ENCODE measurements at regions of chr17 and their contacts with region 1.

Region 1: DNA sequence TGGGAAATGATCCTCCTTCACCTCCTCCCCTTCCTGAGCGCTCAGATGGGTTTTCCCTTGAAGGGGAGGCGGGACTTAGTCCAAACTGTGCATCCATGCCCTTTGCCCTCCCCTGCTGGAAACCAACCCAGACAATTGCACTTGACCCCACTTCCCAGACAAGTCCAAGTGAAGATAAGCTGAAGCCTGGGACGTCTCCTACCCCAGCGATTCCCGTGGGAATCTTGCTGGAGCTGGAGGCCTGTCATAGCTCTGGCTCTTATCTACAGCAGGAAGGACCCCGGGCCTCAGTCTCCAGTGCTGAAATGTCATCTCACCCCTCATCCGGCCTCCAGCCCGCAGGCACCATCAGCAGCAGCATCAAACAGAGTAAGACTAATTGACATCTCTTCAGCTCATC is 6.5 kb upstream of the NGFR start:
- DNase-seq: no peak
- H3K4me3 ChIP-seq: no peak overlapping the region
- H3K27me3 ChIP-seq: peaks cover 39% of the 10 kb centered on the region
- CTCF ChIP-seq: no peak

Region 2: DNA sequence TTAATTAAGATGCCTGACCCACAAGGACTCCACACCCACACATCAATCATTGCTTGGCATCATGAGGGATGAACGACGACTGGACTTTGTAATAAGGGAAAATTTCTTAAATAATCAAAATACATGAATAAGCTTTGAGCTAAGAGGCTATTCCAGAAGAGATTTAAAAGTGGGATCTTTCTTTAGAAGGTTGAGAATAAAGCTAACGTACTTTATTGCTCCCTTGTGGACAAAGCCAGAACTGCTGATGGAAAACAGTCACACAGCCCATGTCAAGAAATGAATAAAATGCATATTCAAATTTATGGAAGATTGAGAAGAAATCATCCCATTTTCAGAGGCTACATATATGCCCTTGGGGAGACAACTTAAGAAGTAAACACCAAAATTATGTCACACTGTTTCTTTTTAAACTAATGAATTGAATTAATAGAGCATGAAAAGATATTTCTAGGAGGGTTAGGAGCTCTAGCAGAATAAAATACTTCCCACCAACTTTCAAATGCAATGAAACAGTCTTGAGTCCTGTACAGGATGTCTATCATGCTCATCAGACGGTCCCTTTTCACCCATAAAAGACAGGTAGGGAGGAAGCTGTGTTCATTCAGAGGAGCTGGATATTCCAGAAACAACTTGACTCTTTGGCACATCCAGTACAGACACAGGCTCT is 197.8 kb before region 1 on chr17:
- CTCF ChIA-PET with region 1: no interaction called
- POLR2A ChIA-PET with region 1: no interaction called
- DNase-seq: no peak
- H3K4me3 ChIP-seq: no peak overlapping the region
- H3K27me3 ChIP-seq: no peaks in the 10 kb centered on the region
- CTCF ChIP-seq: peak; percentile 75

Region 3: DNA sequence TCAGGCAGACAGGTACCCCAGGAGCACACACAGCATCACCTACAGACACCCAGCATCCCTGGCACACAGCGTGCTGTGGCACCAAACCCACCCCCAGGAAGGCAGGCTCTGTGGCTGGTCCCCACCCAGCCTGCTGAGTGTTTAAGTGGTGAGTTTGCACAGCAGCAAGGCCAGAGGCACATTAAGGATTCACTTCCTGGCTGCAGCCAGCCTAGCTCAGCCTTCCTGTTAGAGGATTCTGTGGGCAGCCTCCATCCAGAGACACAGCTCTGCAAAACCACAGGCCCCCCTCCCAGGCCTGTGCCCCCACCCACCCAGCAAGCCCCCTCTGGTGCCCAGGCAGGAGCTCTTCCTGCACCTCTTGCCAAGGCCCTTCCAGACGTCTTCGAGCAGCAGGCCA is 37.9 kb before region 1 on chr17:
- CTCF ChIA-PET with region 1: no interaction called
- POLR2A ChIA-PET with region 1: interaction called, 10 read pairs
- DNase-seq: no peak
- H3K4me3 ChIP-seq: no peak overlapping the region
- H3K27me3 ChIP-seq: peaks cover 3% of the 10 kb centered on the region; the same call in 1 of the 2 replicates
- CTCF ChIP-seq: no peak

Region 4: GRCh38 chr17:49723423-49723822 is 234.8 kb after region 1 on chr17:
- CTCF ChIA-PET with region 1: no interaction called
- POLR2A ChIA-PET with region 1: no interaction called
- DNase-seq: no peak
- H3K4me3 ChIP-seq: no peak overlapping the region
- H3K27me3 ChIP-seq: no peaks in the 10 kb centered on the region
- CTCF ChIP-seq: no peak